Spleen (tissue), 13 donors: ENCODE measurements at regions of chr19 and their contacts with region 1.

Region 1: GRCh38 chr19:48954595-48955310 is at the start of gene BAX:
- DNase-seq: peak; percentile 98
- H3K4me3 ChIP-seq: peak within 1 kb of the TSS; percentile 76 to 97 (median 90)
- H3K27ac ChIP-seq: peak within 1 kb of the TSS; percentile 53 to 96 (median 92)
- H3K4me1 ChIP-seq: peaks cover 12 to 51% (median 22%) of the 10 kb centered on the region in 6 donors
- H3K27me3 ChIP-seq: no peaks in the 10 kb centered on the region
- CTCF ChIP-seq: peak in 3 of 11 experiments; percentile 5 to 36 (median 19)
- POLR2A ChIP-seq: peak in 2 of 3 donors; percentile 38 to 58
- total RNA-seq, gene BAX: 65.9 to 158 (median 113) TPM

Region 2: GRCh38 chr19:48752498-48753365 is 202.0 kb before region 1 on chr19 and contains the start of gene FUT1:
- intact Hi-C with region 1: no loop called
- DNase-seq: peak; percentile 89
- H3K4me3 ChIP-seq: peak within 1 kb of the TSS; percentile 37 to 69 (median 40)
- H3K27ac ChIP-seq: peak within 1 kb of the TSS; percentile 55 to 81 (median 76)
- H3K4me1 ChIP-seq: peaks cover 10 to 66% (median 34%) of the 10 kb centered on the region in 6 donors
- H3K27me3 ChIP-seq: peaks cover 0 to 58% (median 21%) of the 10 kb centered on the region in 7 donors
- CTCF ChIP-seq: peak in 1 of 11 experiments; percentile 3
- POLR2A ChIP-seq: peak in 1 of 3 donors; percentile 8
- total RNA-seq, gene FUT1: 5.6 to 22.9 (median 10.0) TPM

Region 3: DNA sequence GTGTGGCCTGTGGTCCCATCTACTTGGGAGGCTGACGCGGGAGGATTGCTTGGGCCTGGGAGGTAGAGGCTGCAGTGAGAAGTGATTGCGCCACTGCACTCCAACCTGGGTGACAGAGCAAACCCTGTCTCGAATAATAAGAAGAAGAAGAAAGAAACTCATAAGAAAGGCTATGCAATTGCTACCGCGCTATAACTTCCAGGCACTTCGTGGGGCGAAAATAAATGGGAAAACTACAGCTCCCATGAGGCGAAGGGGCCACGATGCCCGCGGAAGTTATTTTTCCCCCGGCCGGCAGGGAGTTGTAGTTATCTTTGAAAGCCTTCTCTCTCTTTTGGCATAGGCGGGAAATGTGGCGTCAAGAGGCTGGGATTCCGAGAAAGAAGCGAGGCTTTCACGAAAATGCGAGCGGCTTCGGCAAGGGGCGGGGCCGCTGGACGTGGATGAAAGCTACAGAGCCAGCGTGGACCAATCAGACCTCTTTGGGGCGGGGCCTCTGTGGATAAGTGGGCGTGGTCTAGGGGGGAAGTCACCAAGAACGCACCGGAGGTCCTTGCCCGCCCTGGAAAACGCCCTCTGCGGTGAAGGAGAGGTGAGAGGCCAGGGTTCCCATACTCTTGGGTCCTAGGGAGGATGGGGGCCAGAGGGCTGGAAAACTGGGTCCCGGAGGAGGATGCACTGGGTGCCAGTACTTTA is 54.8 kb before region 1 on chr19 and contains the start of gene NUCB1:
- intact Hi-C with region 1: loop called (anchors 10 kb)
- DNase-seq: peak; percentile 99
- H3K4me3 ChIP-seq: peak within 1 kb of the TSS; percentile 70 to 92 (median 82)
- H3K27ac ChIP-seq: peak within 1 kb of the TSS; percentile 63 to 94 (median 90)
- H3K4me1 ChIP-seq: peaks cover 10 to 53% (median 46%) of the 10 kb centered on the region in 6 donors
- H3K27me3 ChIP-seq: peaks cover 0 to 18% (median 0%) of the 10 kb centered on the region in 7 donors
- CTCF ChIP-seq: peak in 10 of 11 experiments; percentile 17 to 66 (median 43)
- POLR2A ChIP-seq: peak in 1 of 3 donors; percentile 19
- total RNA-seq, gene NUCB1: 217 to 321 (median 268) TPM

Region 4: GRCh38 chr19:49017666-49018351 is 63.1 kb after region 1 on chr19:
- intact Hi-C with region 1: no loop called
- DNase-seq: peak; percentile 90
- H3K4me3 ChIP-seq: peak overlapping the region; percentile 43 to 77 (median 52)
- H3K27ac ChIP-seq: peak overlapping the region in 7 of 8 donors; percentile 9 to 59 (median 44)
- H3K4me1 ChIP-seq: peaks cover 4 to 32% (median 25%) of the 10 kb centered on the region in 6 donors
- H3K27me3 ChIP-seq: peaks cover 0 to 34% (median 7%) of the 10 kb centered on the region in 7 donors
- CTCF ChIP-seq: peak in 7 of 11 experiments; percentile 38 to 76 (median 63)
- POLR2A ChIP-seq: no peak